ENCODE measurements at regions of chr6 and their contacts with region 1.

Region 1: GRCh38 chr6:28136585-28137504 is 4.8 kb upstream of the ZKSCAN8 start:
- DNase-seq: peak; percentile 47 to 87 (median 68)
- ATAC-seq: peak; percentile 42
- H3K4me3 ChIP-seq: peak overlapping the region; percentile 79
- H3K4me3 Mint-ChIP-seq: peak overlapping the region; percentile 95
- H3K27ac ChIP-seq: peak overlapping the region; percentile 93 to 99
- H3K27ac Mint-ChIP-seq: peak overlapping the region; percentile 95
- H3K4me1 ChIP-seq: peaks cover 37% of the 10 kb centered on the region
- H3K4me1 Mint-ChIP-seq: peaks cover 76% of the 10 kb centered on the region
- H3K27me3 ChIP-seq: no peaks in the 10 kb centered on the region
- H3K27me3 Mint-ChIP-seq: no peaks in the 10 kb centered on the region
- CTCF ChIP-seq: no peak

Region 2: DNA sequence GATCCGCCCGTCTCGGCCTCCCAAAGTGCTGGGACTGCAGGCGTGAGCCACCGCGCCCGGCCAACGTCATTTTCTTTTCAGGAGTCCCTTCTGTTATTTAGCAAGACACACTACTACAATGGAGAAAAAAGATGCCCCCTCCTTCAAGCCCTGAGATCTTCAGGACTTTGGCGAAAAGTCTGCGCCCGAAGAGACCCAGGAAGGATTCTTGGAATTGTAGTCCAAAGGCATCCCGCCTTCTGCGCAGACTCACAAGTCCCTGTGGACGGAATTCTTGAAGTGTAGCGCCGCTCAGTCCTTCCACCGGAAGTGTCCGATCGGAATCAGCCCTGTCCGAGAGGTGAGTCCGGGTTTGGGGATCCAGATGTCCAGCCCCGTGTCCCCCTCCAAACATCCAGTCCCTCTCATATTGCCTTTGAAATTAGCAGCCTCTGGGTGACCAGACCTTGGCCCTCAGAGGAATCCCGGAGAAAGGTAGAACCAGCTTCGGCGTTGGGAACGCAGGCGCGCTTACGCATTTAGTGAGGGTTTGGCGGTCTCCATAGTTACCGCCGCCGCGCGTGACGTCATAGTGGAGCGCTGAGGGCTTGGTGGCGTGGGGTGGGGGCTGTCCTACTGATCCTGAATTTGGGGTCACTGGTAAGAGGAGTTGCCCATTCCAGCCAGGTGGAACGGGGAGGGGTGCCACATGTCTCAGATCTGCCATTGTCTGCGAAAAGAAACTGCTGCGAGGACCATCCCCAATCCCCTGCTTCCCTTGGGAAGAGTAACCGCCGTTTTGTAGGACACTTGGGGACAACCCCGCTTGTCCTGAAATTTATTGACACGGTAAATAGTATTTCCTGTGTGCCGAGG is 56.0 kb before region 1 on chr6:
- CTCF ChIA-PET with region 1: no interaction called
- POLR2A ChIA-PET with region 1: interaction called, 4 read pairs
- intact Hi-C with region 1: loop called (anchors 2 to 10 kb)
- DNase-seq: peak; percentile 81 to 96 (median 90)
- ATAC-seq: peak; percentile 76
- H3K4me3 ChIP-seq: peak overlapping the region; percentile 71
- H3K4me3 Mint-ChIP-seq: peak overlapping the region; percentile 86
- H3K27ac ChIP-seq: peak overlapping the region; percentile 82 to 90
- H3K27ac Mint-ChIP-seq: peak overlapping the region; percentile 88
- H3K4me1 ChIP-seq: peaks cover 16% of the 10 kb centered on the region
- H3K4me1 Mint-ChIP-seq: peaks cover 22% of the 10 kb centered on the region
- H3K27me3 ChIP-seq: no peaks in the 10 kb centered on the region
- H3K27me3 Mint-ChIP-seq: no peaks in the 10 kb centered on the region
- CTCF ChIP-seq: no peak

Region 3: GRCh38 chr6:28124102-28124970 is 12.5 kb before region 1 on chr6 and contains the start of gene ZSCAN16:
- CTCF ChIA-PET with region 1: interaction called, 7 read pairs
- POLR2A ChIA-PET with region 1: interaction called, 71 read pairs
- intact Hi-C with region 1: loop called (anchors 1 kb)
- DNase-seq: peak; percentile 51 to 87 (median 70)
- ATAC-seq: peak; percentile 56
- H3K4me3 ChIP-seq: peak within 1 kb of the TSS; percentile 85
- H3K4me3 Mint-ChIP-seq: peak within 1 kb of the TSS; percentile 83
- H3K27ac ChIP-seq: peak within 1 kb of the TSS; percentile 84 to 91
- H3K27ac Mint-ChIP-seq: peak within 1 kb of the TSS; percentile 95
- H3K4me1 ChIP-seq: peaks cover 20% of the 10 kb centered on the region
- H3K4me1 Mint-ChIP-seq: peaks cover 56% of the 10 kb centered on the region
- H3K27me3 ChIP-seq: no peaks in the 10 kb centered on the region
- H3K27me3 Mint-ChIP-seq: no peaks in the 10 kb centered on the region
- CTCF ChIP-seq: no peak
- total RNA-seq, gene ZSCAN16: 7.3 to 7.4 TPM

Region 4: DNA sequence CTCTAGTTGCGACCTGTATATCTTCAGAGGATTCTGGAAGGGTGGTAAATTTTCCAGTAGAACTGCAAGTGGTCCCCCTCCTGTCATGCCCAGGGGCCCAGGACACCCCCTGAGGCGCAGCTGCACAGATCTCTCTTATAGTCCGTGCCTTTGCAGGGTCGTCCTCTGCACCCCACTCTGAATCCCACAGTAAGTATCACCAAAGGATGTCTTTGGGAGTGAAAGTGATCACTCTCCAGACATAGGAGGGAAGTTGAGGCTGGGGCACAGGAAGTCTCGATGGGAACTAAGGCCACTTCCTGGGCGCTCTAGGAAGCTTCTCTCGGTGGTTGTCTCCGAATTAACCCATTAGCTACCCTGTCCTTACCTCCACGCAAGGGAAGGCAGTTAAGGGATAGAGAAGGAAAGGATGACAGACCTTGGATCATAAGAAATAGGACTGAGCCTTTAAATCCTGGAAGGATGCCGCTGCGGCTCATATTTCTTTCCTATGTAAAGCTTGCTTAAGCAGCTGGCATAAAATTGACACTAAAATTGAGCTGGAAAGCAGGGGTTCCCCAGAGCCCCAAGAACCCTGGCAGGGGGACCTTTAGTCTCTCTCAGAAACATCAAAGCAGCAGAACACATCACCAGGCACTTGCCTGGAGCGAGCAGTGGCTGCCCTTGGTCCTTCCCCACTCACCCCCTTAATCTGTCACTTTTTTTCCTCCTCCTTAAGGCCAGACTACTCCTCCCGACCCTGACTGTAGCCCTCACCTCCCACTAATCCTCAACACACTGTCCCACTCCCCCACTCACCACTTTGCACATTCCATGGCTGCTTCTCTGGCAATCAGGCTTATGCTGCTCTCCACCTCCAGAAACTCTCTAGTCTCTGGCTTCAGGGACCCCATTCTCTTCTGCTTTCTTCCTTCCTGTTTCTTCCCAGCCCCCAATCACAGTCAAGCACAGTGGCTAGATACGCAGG is 115.4 kb after region 1 on chr6 and contains the start of gene ZKSCAN4:
- CTCF ChIA-PET with region 1: interaction called, 5 read pairs
- POLR2A ChIA-PET with region 1: interaction called, 26 read pairs
- intact Hi-C with region 1: loop called (anchors 1 to 2 kb)
- DNase-seq: peak; percentile 65 to 91 (median 80)
- ATAC-seq: peak; percentile 91
- H3K4me3 ChIP-seq: peak within 1 kb of the TSS; percentile 84
- H3K4me3 Mint-ChIP-seq: peak within 1 kb of the TSS; percentile 99
- H3K27ac ChIP-seq: peak within 1 kb of the TSS in 1 of 2 donors; percentile 61
- H3K27ac Mint-ChIP-seq: peak within 1 kb of the TSS; percentile 93
- H3K4me1 ChIP-seq: peaks cover 24% of the 10 kb centered on the region
- H3K4me1 Mint-ChIP-seq: peaks cover 43% of the 10 kb centered on the region
- H3K27me3 ChIP-seq: no peaks in the 10 kb centered on the region
- H3K27me3 Mint-ChIP-seq: peaks cover 4% of the 10 kb centered on the region
- CTCF ChIP-seq: no peak
- total RNA-seq, gene ZKSCAN4: 0.84 to 1.6 TPM

Region 5: DNA sequence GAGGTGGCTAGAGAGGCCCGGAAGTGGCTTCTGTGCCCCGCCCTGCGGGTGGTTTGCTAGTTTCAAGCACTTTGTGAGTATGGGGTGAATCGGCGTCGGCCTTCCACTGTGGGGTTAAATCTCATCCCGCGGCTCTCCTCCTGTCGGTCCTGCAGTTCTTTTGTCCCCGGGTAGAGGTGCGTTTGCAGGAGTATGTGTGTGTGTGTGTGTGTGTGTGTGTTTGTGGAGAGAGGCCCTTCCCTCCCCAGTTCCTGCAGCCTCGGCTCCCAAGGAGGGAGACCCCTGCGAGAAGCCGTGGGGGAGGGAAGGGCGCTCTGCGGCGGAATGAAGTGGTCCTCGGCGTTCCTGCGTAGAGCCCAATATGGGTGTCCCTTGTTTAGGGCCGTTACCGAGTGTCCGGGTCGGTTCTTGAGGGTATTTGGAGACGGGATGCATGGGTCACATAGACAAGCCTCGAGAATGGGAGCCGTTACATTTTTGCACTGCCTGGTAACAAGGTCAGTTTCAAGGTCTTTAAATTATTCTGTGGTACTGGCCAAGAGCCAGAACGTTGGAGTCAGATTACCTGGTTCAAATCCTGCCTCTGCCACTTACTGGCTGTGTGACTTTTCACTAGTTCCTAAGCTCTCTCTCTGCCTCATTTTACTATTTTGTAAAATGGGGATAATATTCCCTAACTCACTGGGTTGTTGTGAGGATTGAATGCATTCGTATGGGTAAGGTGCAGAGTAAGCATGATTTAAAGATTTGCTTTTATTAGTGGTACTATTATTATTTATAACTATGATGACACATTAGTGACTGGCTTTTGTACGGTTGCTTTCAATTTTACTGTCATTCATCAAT is 213.3 kb after region 1 on chr6 and contains the start of gene ZKSCAN3:
- CTCF ChIA-PET with region 1: interaction called, 10 read pairs
- POLR2A ChIA-PET with region 1: interaction called, 15 read pairs
- intact Hi-C with region 1: no loop called
- DNase-seq: peak; percentile 65 to 89 (median 80)
- ATAC-seq: peak; percentile 100
- H3K4me3 ChIP-seq: peak within 1 kb of the TSS; percentile 73
- H3K4me3 Mint-ChIP-seq: peak within 1 kb of the TSS; percentile 99
- H3K27ac ChIP-seq: peak within 1 kb of the TSS in 1 of 2 donors; percentile 46
- H3K27ac Mint-ChIP-seq: peak within 1 kb of the TSS; percentile 85
- H3K4me1 ChIP-seq: peaks cover 13% of the 10 kb centered on the region
- H3K4me1 Mint-ChIP-seq: peaks cover 43% of the 10 kb centered on the region
- H3K27me3 ChIP-seq: peaks cover 0 to 11% of the 10 kb centered on the region in 2 experiments
- H3K27me3 Mint-ChIP-seq: peaks cover 27% of the 10 kb centered on the region
- CTCF ChIP-seq: no peak
- total RNA-seq, gene ZKSCAN3: 0.88 to 0.89 TPM

Region 6: GRCh38 chr6:28399350-28400121 is 262.7 kb after region 1 on chr6 and contains the start of gene ZSCAN12:
- CTCF ChIA-PET with region 1: no interaction called
- POLR2A ChIA-PET with region 1: interaction called, 14 read pairs
- intact Hi-C with region 1: loop called in 1 of 2 experiments (anchors 5 kb)
- DNase-seq: peak; percentile 70 to 90 (median 82)
- ATAC-seq: peak; percentile 92
- H3K4me3 ChIP-seq: peak within 1 kb of the TSS; percentile 69
- H3K4me3 Mint-ChIP-seq: peak within 1 kb of the TSS; percentile 97
- H3K27ac ChIP-seq: peak within 1 kb of the TSS; percentile 23 to 49
- H3K27ac Mint-ChIP-seq: peak within 1 kb of the TSS; percentile 86
- H3K4me1 ChIP-seq: peaks cover 20% of the 10 kb centered on the region
- H3K4me1 Mint-ChIP-seq: peaks cover 55% of the 10 kb centered on the region
- H3K27me3 ChIP-seq: no peaks in the 10 kb centered on the region
- H3K27me3 Mint-ChIP-seq: peaks cover 32% of the 10 kb centered on the region
- CTCF ChIP-seq: peak; percentile 70
- total RNA-seq, gene ZSCAN12: 2.0 to 2.3 TPM